Endothelial cell of umbilical vein (primary cell): ENCODE measurements at regions of chr4 and their contacts with region 1.

Region 1: DNA sequence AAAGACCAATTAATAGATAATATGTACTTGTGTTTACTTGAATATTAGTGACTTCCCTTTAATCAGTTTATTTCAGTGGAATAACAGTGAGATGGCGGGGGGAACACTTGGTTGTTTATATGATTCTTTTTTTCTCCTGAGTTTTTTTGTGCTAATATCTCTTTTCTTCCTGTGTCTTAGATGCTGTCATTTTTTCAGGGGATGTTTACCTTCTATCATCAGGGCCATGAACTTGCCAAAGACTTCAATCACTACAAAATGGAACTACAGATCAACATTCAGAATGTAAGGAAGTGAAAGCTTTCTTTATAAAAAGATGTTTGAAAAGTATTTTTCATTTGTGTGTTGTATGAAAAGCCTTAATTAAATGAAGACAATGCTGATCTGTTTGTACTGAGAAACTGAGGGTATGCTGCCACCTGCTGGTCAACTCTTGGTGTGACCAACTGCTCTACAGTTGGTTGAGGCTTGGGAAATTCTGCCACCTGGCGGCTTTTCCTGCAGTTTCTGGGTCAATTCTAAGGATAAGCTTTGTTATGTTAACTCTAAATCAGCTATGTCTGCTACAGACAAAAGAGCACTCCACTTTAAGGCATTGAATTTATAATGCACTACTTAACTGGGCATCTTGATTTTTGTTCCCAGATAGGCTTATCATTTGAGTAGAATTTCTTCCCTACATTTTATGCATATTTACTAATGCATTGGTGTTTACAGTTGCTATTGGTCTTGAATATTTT is 134.8 kb downstream of the ARHGAP10 start:
- DNase-seq: peak; percentile 92
- H3K4me3 ChIP-seq: no peak overlapping the region
- H3K27ac ChIP-seq: no peak overlapping the region
- H3K4me1 ChIP-seq: peaks cover 9% of the 10 kb centered on the region
- H3K27me3 ChIP-seq: no peaks in the 10 kb centered on the region
- CTCF ChIP-seq: peak; percentile 92 to 99
- POLR2A ChIP-seq: no peak

Region 2: GRCh38 chr4:147518846-147519767 is 347.6 kb before region 1 on chr4:
- CTCF ChIA-PET with region 1: interaction called, 105 read pairs
- POLR2A ChIA-PET with region 1: no interaction called
- dilution Hi-C with region 1: no loop called
- intact Hi-C with region 1: loop called (anchors 1 kb)
- DNase-seq: peak; percentile 73
- H3K4me3 ChIP-seq: no peak overlapping the region
- H3K27ac ChIP-seq: no peak overlapping the region
- H3K4me1 ChIP-seq: no peaks in the 10 kb centered on the region
- H3K27me3 ChIP-seq: peaks cover 4 to 8% of the 10 kb centered on the region in 2 experiments
- CTCF ChIP-seq: peak; percentile 77 to 85
- POLR2A ChIP-seq: no peak

Region 3: DNA sequence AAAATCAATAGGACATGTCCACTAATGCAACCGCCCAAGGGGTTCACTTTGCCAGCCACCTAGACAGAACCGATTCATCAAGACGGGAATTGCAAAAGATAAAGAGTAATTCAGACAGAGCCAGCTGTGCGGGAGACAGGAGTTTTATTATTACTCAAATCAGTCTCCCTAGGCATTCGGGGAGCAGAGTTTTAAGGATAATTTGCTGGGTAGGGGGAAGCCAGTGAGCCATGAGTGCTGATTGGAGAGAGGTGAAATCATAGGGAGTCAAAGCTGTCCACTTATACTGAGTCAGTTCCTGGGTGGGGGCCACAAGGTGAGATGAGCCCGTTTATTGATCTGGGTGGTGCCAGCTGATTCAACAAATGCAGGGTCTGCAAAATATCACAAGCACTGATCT is 241.0 kb before region 1 on chr4:
- CTCF ChIA-PET with region 1: interaction called, 65 read pairs
- POLR2A ChIA-PET with region 1: no interaction called
- dilution Hi-C with region 1: no loop called
- intact Hi-C with region 1: loop called (anchors 5 kb)
- DNase-seq: no peak
- H3K4me3 ChIP-seq: no peak overlapping the region
- H3K27ac ChIP-seq: no peak overlapping the region
- H3K4me1 ChIP-seq: no peaks in the 10 kb centered on the region
- H3K27me3 ChIP-seq: no peaks in the 10 kb centered on the region
- CTCF ChIP-seq: no peak
- POLR2A ChIP-seq: no peak

Region 4: GRCh38 chr4:147678796-147679549 is 187.7 kb before region 1 on chr4:
- CTCF ChIA-PET with region 1: interaction called, 57 read pairs
- POLR2A ChIA-PET with region 1: interaction called, 6 read pairs
- dilution Hi-C with region 1: no loop called
- intact Hi-C with region 1: loop called (anchors 1 kb)
- DNase-seq: no peak
- H3K4me3 ChIP-seq: no peak overlapping the region
- H3K27ac ChIP-seq: no peak overlapping the region
- H3K4me1 ChIP-seq: peaks cover 8% of the 10 kb centered on the region
- H3K27me3 ChIP-seq: no peaks in the 10 kb centered on the region
- CTCF ChIP-seq: no peak
- POLR2A ChIP-seq: no peak

Region 5: DNA sequence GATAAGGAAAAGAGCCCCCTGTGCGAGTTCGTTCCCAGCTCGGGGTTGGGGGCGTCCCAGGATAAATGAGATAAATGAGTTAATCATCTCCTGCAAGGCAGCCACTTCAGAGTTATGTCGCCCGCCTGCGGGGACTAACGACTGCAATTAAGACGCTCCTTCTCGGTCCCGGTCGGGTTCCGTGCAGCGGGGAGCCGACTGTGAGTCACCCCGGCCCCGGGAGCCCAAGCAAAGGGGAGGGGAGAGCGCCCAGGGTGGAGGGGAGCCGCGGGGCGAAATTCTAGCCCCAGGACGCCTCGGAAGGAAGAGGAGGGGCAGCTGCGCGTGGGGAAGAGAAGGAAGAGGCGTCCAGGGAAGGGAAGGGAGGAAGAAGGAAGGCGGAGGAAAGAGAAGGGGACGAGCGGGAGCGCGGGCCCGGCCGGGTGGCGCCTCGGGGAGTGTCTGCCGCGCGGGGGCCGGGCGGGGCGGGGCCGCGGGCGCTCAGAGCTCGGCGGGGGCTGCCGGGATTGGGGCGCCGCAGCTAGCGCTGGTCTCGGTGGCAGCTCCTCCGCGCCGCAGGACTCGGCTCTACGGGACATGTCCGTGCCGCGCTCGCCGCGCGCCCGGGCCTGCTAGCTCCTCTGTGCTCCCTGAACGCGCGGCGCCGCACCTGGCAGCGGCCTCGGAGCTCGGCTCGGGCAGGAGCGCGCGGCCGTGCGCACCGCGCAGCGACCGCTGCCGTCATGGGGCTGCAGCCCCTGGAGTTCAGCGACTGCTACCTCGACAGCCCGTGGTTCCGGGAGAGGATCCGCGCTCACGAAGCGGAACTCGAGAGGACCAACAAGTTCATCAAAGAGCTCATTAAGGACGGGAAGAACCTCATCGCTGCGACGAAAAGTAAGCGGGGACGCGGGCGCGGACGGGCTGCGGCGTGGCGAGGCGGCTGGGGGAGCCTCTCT is 134.9 kb before region 1 on chr4 and contains the start of gene ARHGAP10:
- CTCF ChIA-PET with region 1: interaction called, 170 read pairs
- POLR2A ChIA-PET with region 1: no interaction called
- dilution Hi-C with region 1: no loop called
- intact Hi-C with region 1: loop called (anchors 1 kb)
- DNase-seq: peak; percentile 78
- H3K4me3 ChIP-seq: peak within 1 kb of the TSS; percentile 72 to 81 (median 79)
- H3K27ac ChIP-seq: peak within 1 kb of the TSS; percentile 83
- H3K4me1 ChIP-seq: peaks cover 42% of the 10 kb centered on the region
- H3K27me3 ChIP-seq: no peaks in the 10 kb centered on the region
- CTCF ChIP-seq: no peak
- POLR2A ChIP-seq: peak; percentile 86
- total RNA-seq, gene ARHGAP10: 36.7 and 39.1 TPM in 2 replicates

Region 6: DNA sequence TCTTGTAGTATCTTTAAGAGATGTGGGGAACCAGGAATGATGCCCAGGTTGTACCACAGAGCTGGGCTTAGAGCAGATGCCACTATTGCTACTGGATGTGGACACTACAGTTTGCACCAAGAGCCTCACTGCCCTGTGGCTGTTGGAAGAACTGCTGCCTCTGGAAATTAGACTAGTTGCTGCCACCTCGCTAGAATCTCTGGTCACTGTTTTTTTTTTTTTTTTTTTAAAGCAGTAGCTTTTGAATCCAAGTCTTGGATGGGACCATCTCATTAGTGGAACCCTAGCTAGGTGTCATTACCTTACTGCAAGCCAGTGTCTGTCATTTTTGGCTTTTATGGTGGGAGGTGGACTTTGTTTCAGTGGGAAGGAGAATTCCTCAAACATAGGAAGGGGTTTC is 29.3 kb before region 1 on chr4:
- CTCF ChIA-PET with region 1: interaction called, 37 read pairs
- POLR2A ChIA-PET with region 1: no interaction called
- dilution Hi-C with region 1: no loop called
- intact Hi-C with region 1: no loop called
- DNase-seq: no peak
- H3K4me3 ChIP-seq: no peak overlapping the region
- H3K27ac ChIP-seq: no peak overlapping the region
- H3K4me1 ChIP-seq: peaks cover 11% of the 10 kb centered on the region
- H3K27me3 ChIP-seq: no peaks in the 10 kb centered on the region
- CTCF ChIP-seq: no peak
- POLR2A ChIP-seq: no peak